CD4-positive, alpha-beta memory T cell (primary cell): ENCODE measurements at regions of chr3 and their contacts with region 1.

Region 1: DNA sequence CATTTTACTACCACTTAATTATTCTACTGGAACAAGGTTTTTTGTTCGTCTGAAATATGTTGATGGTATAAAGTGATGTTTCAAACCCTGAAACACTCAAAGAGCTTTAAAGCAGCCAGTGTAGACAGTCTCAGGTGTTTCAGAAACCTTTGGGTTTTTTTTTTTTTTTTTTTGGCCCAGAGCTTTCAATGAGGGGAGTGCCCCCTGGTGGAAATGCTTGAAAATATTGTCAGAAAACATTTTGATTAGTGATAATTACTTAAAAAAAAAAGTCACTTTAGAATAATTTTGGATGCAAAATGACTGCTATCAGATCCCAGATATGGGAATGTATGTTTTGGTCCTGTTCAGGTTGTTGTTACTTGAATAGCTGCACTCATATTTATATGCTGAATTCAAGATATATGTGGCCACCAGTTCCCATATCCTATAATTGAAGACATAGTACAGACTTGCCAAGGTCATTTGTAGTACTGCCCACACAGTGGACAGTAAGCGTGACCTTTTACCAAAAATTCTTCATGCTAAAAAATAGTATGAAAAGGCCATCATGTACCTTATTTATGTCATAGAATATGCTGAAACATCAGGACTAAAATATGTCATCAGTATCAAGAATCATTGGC is 35.9 kb downstream of the SATB1 start:
- DNase-seq: peak in 4 of 5 donors; percentile 29 to 45 (median 36)
- H3K4me3 ChIP-seq: no peak overlapping the region
- H3K4me3 Mint-ChIP-seq: peak overlapping the region in 1 of 8 donors; percentile 43
- H3K27ac ChIP-seq: no peak overlapping the region
- H3K27ac Mint-ChIP-seq: peak overlapping the region in 2 of 7 donors; percentile 22 to 69
- H3K4me1 ChIP-seq: peaks cover 29% of the 10 kb centered on the region
- H3K4me1 Mint-ChIP-seq: peaks cover 15 to 53% (median 27%) of the 10 kb centered on the region in 4 donors
- H3K27me3 ChIP-seq: no peaks in the 10 kb centered on the region
- H3K27me3 Mint-ChIP-seq: no peaks in the 10 kb centered on the region

Region 2: DNA sequence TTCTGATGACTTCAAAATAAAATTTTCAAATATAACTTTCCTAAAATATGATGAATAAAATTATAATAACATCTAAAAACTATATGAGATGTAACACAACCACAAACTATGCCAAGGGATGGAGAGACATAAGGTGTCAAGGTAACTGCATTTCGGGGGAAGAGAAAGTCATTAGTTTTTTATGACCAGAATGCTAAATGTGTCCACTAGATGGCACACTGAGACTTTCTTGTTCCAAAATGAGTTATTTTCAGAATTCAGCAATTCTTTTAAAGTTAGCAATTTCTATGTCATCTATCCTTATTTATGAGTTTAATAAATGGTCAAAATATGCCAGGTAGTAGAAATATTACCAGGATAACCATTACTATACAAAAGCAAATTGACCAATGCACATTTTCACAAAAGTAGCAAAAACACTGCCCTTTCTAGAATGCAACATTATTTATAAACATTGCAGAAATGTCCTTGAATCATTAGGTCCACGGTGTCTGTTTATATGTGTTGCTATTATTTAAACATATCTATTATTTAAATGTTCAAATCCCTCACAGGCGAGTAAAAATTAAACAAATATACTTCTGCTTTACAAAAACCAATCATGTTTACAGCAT is 1130.3 kb before region 1 on chr3:
- CTCF ChIA-PET with region 1: no interaction called
- POLR2A ChIA-PET with region 1: no interaction called
- intact Hi-C with region 1: loop called (anchors 2 kb)
- DNase-seq: peak in 4 of 5 donors; percentile 31 to 45 (median 39)
- H3K4me3 ChIP-seq: no peak overlapping the region
- H3K4me3 Mint-ChIP-seq: no peak overlapping the region
- H3K27ac ChIP-seq: no peak overlapping the region
- H3K27ac Mint-ChIP-seq: no peak overlapping the region
- H3K4me1 ChIP-seq: no peaks in the 10 kb centered on the region
- H3K4me1 Mint-ChIP-seq: peaks cover 0 to 1% (median 0%) of the 10 kb centered on the region in 4 donors
- H3K27me3 ChIP-seq: no peaks in the 10 kb centered on the region
- H3K27me3 Mint-ChIP-seq: no peaks in the 10 kb centered on the region

Region 3: DNA sequence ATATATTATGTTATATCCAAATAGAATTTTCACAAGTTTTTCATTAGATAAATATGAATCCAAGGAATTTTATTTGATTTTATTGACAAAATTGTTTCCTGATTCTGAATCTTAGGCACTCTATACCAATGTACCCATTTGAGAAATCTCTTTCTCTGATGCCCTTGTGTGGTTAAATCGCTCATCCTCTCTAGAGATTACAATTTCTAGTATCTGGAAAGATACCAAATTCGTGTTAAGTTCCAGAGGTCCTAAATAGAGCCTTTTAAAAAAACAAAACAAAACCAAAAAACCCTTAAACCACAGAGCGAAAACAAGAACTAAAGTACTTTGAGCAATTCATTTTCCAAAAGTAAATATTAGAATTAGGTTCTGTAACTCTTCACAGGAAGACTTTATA is 15.9 kb after region 1 on chr3:
- CTCF ChIA-PET with region 1: interaction called, 12 read pairs
- POLR2A ChIA-PET with region 1: interaction called, 3 read pairs
- intact Hi-C with region 1: no loop called
- DNase-seq: no peak
- H3K4me3 ChIP-seq: no peak overlapping the region
- H3K4me3 Mint-ChIP-seq: peak overlapping the region in 3 of 8 donors; percentile 35 to 55 (median 53)
- H3K27ac ChIP-seq: no peak overlapping the region
- H3K27ac Mint-ChIP-seq: peak overlapping the region in 4 of 7 donors; percentile 54 to 88 (median 70)
- H3K4me1 ChIP-seq: peaks cover 60% of the 10 kb centered on the region
- H3K4me1 Mint-ChIP-seq: peaks cover 53 to 89% (median 69%) of the 10 kb centered on the region in 4 donors
- H3K27me3 ChIP-seq: no peaks in the 10 kb centered on the region
- H3K27me3 Mint-ChIP-seq: no peaks in the 10 kb centered on the region

Region 4: DNA sequence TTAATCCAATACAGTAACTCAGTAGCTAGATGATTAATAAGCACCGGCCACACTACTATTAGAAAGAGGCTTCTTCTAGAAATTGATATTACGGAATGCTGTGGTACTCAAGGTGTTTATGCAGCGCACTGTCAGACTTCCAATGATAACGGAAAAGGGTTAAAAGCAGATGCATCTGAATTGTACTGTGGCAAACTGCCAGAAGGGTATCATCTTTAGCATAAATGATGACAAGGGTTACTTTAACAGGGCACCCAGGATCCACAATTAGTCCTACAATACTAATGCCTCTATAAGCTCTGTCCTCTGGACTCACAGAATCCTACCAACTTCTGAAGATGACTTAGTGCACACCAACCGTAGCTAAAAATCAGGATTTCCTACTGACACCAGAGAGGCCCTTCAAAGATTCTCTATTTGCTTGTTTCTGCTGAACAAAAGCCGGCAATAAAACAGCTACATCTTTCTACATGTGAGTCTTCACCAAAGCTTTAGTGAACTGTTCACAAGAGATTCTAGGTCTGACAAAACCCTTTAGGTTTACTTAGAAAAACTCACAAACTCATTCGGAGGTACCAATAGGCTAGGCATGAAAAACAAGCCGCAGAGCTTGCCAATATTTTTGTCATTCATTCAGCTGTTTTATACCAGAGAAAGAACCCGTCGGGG is 28.8 kb after region 1 on chr3:
- CTCF ChIA-PET with region 1: interaction called, 11 read pairs
- POLR2A ChIA-PET with region 1: interaction called, 3 read pairs
- intact Hi-C with region 1: loop called (anchors 1 kb)
- DNase-seq: no peak
- H3K4me3 ChIP-seq: no peak overlapping the region
- H3K4me3 Mint-ChIP-seq: peak overlapping the region; percentile 6 to 80 (median 64)
- H3K27ac ChIP-seq: no peak overlapping the region
- H3K27ac Mint-ChIP-seq: peak overlapping the region in 6 of 7 donors; percentile 48 to 82 (median 68)
- H3K4me1 ChIP-seq: peaks cover 74% of the 10 kb centered on the region
- H3K4me1 Mint-ChIP-seq: peaks cover 46 to 87% (median 74%) of the 10 kb centered on the region in 4 donors
- H3K27me3 ChIP-seq: no peaks in the 10 kb centered on the region
- H3K27me3 Mint-ChIP-seq: no peaks in the 10 kb centered on the region

Region 5: GRCh38 chr3:18474202-18474601 is 85.0 kb after region 1 on chr3:
- CTCF ChIA-PET with region 1: no interaction called
- POLR2A ChIA-PET with region 1: no interaction called
- intact Hi-C with region 1: no loop called
- DNase-seq: no peak
- H3K4me3 ChIP-seq: no peak overlapping the region
- H3K4me3 Mint-ChIP-seq: no peak overlapping the region
- H3K27ac ChIP-seq: no peak overlapping the region
- H3K27ac Mint-ChIP-seq: no peak overlapping the region
- H3K4me1 ChIP-seq: no peaks in the 10 kb centered on the region
- H3K4me1 Mint-ChIP-seq: peaks cover 0 to 2% (median 0%) of the 10 kb centered on the region in 4 donors
- H3K27me3 ChIP-seq: no peaks in the 10 kb centered on the region
- H3K27me3 Mint-ChIP-seq: no peaks in the 10 kb centered on the region

Region 6: DNA sequence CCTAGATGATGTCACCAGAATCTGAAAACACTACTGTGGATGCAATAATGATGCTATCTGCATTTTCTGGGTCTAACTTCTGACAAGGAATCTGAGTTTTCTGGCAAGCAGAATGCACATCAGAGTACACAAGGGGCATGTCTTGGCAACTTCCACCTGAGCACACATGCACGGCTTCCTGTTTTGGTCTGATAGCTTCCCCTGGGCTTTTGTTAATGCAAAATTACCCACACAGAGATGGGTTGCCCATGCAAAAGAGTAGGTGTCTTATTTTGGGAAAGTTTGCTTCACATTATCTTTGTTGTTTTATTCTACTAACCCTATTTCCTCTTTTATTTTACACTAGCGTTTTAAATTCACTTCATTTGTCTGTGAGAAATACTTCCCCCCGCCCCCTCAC is 110.1 kb after region 1 on chr3:
- CTCF ChIA-PET with region 1: no interaction called
- POLR2A ChIA-PET with region 1: no interaction called
- intact Hi-C with region 1: loop called (anchors 5 kb)
- DNase-seq: peak; percentile 25 to 31 (median 27)
- H3K4me3 ChIP-seq: no peak overlapping the region
- H3K4me3 Mint-ChIP-seq: peak overlapping the region in 6 of 8 donors; percentile 33 to 78 (median 70)
- H3K27ac ChIP-seq: no peak overlapping the region
- H3K27ac Mint-ChIP-seq: peak overlapping the region in 6 of 7 donors; percentile 0 to 86 (median 72)
- H3K4me1 ChIP-seq: peaks cover 23% of the 10 kb centered on the region
- H3K4me1 Mint-ChIP-seq: peaks cover 11 to 27% (median 23%) of the 10 kb centered on the region in 4 donors
- H3K27me3 ChIP-seq: no peaks in the 10 kb centered on the region
- H3K27me3 Mint-ChIP-seq: no peaks in the 10 kb centered on the region